Endothelial cell of umbilical vein (primary cell): ENCODE measurements at regions of chr18 and their contacts with region 1.

Region 1: GRCh38 chr18:2655178-2655953 is at the start of gene SMCHD1:
- DNase-seq: peak; percentile 81
- H3K4me3 ChIP-seq: peak within 1 kb of the TSS; percentile 60 to 99 (median 78)
- H3K27ac ChIP-seq: peak within 1 kb of the TSS; percentile 90
- H3K4me1 ChIP-seq: peaks cover 32% of the 10 kb centered on the region
- H3K27me3 ChIP-seq: peaks cover 0 to 4% of the 10 kb centered on the region in 2 experiments
- CTCF ChIP-seq: no peak
- POLR2A ChIP-seq: peak; percentile 36
- total RNA-seq, gene SMCHD1: 36.2 and 39.9 TPM in 2 replicates

Region 2: GRCh38 chr18:2571200-2572143 is 83.9 kb before region 1 on chr18 and contains the starts of genes METTL4 and NDC80:
- CTCF ChIA-PET with region 1: no interaction called
- POLR2A ChIA-PET with region 1: no interaction called
- dilution Hi-C with region 1: no loop called
- intact Hi-C with region 1: loop called (anchors 2 kb)
- DNase-seq: peak; percentile 96
- H3K4me3 ChIP-seq: peak within 1 kb of the TSS; percentile 80 to 92 (median 89)
- H3K27ac ChIP-seq: peak within 1 kb of the TSS; percentile 92
- H3K4me1 ChIP-seq: peaks cover 32% of the 10 kb centered on the region
- H3K27me3 ChIP-seq: no peaks in the 10 kb centered on the region
- CTCF ChIP-seq: no peak
- POLR2A ChIP-seq: no peak
- total RNA-seq, gene METTL4: 16.1 and 17.4 TPM in 2 replicates
- total RNA-seq, gene NDC80: 39.6 and 43.2 TPM in 2 replicates

Region 3: DNA sequence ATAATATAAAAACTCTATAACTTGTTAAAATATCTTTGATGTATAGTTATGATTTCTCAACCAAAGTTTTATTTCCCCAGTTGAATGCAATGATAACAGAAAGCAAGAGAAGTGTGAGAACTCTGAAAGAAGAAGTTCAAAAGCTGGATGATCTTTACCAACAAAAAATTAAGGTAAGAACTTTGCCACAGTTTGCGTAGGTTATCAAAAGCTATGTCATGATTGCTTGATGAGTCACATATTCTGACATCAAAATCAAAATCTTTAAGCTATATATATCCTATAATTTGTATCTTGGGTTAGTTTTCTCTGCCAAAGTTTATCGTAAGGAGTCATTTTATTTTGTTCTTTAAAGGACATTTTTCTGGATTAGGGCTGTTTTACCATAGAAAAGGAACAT is 49.0 kb before region 1 on chr18:
- CTCF ChIA-PET with region 1: interaction called, 6 read pairs
- POLR2A ChIA-PET with region 1: interaction called, 3 read pairs
- dilution Hi-C with region 1: no loop called
- intact Hi-C with region 1: loop called (anchors 5 kb)
- DNase-seq: peak; percentile 30
- H3K4me3 ChIP-seq: no peak overlapping the region
- H3K27ac ChIP-seq: no peak overlapping the region
- H3K4me1 ChIP-seq: peaks cover 4% of the 10 kb centered on the region
- H3K27me3 ChIP-seq: no peaks in the 10 kb centered on the region
- CTCF ChIP-seq: no peak
- POLR2A ChIP-seq: no peak

Region 4: GRCh38 chr18:2636126-2636631 is 19.2 kb before region 1 on chr18:
- CTCF ChIA-PET with region 1: interaction called, 3 read pairs
- POLR2A ChIA-PET with region 1: no interaction called
- dilution Hi-C with region 1: no loop called
- intact Hi-C with region 1: loop called (anchors 2 kb)
- DNase-seq: no peak
- H3K4me3 ChIP-seq: peak overlapping the region in 1 of 3 experiments; percentile 2
- H3K27ac ChIP-seq: peak overlapping the region; percentile 36
- H3K4me1 ChIP-seq: peaks cover 12% of the 10 kb centered on the region
- H3K27me3 ChIP-seq: no peaks in the 10 kb centered on the region
- CTCF ChIP-seq: no peak
- POLR2A ChIP-seq: no peak

Region 5: DNA sequence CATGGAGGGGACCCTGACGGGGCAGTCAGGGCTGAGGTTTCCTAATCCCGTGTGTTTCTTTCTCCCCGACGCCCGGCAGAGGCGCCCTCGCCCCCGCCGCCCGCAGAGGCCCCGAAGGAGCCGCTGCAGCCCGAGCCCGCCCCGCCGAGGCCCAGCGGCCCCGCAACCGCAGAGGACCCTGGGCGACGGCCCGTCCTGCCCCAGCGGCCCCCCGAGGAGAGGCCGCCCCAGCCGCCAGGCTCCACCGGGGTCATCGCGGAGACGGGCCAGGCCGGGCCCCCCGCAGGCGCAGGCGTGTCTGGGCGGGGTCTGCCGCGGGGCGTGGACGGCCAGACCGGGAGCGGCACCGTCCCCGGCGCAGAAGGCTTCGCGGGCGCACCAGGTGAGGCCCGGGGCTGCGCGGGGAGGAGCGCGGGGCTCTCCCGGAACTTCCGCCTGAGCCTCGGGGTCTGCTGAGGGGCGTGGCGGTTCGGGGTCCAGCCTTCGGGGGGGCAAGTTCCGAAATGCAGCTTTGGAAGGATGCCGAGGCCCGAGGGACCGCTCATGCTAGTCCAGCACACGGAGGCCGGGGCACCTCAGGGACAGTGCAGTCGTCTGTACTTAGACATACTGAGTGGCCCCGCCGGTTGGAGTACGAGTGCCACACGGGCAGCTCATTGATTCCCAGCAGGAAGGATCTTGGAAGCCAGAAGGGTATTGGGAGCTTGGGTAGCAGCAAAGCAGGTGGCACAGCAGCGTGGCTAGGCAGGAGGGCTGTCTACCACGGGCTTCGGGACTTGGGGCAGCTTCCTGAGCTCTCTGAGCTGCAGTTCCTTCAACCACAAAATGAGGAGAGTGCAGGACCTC is 251.6 kb after region 1 on chr18:
- CTCF ChIA-PET with region 1: no interaction called
- POLR2A ChIA-PET with region 1: no interaction called
- dilution Hi-C with region 1: no loop called
- intact Hi-C with region 1: loop called (anchors 10 kb)
- DNase-seq: peak; percentile 24
- H3K4me3 ChIP-seq: peak overlapping the region; percentile 48 to 56 (median 55)
- H3K27ac ChIP-seq: peak overlapping the region; percentile 50
- H3K4me1 ChIP-seq: peaks cover 13% of the 10 kb centered on the region
- H3K27me3 ChIP-seq: no peaks in the 10 kb centered on the region
- CTCF ChIP-seq: peak; percentile 30 to 51
- POLR2A ChIP-seq: no peak